ENCODE measurements at regions of chr6 and their contacts with region 1.

Region 1: DNA sequence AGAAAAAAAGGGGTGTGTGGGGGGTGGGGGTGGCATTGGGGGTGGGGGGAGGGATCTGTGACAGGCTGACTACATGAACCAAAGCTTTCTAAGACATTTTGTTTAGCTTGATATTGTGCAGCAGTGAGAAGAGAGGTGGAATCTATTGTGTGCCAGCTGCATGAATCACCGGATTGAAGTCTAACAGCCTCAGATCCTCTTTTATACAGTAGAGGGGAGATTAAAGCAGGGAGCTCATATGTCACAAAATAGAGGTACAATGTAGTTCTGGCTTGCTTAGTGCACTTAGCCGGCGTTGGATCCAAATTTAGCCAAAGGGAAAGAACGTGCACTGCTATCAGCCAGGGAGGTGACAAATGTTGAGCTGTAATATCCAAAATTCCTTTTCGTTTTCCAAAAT is 404.2 kb upstream of the CITED2 start:
- DNase-seq: no peak
- ATAC-seq: peak; percentile 71

Region 2: DNA sequence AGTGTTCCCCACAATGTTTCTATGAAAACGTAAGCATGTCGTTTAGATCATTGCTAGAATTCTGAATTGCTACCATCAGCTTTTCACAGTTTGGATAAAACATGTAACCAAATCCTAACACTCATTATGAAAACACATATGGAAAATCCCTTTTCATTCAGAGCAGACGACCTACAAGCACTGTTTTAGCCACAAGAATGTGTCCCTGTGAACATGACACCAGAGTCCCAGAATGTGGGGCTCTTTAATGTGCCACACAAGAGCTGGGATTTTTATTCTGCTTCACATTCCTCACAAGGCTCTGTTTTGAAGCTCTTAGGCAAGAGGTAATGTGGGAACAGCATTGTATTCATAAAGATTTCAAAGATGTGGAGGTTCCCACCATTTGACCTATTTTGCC is 263.2 kb before region 1 on chr6:
- intact Hi-C with region 1: loop called (anchors 10 kb)
- DNase-seq: no peak
- ATAC-seq: no peak

Region 3: DNA sequence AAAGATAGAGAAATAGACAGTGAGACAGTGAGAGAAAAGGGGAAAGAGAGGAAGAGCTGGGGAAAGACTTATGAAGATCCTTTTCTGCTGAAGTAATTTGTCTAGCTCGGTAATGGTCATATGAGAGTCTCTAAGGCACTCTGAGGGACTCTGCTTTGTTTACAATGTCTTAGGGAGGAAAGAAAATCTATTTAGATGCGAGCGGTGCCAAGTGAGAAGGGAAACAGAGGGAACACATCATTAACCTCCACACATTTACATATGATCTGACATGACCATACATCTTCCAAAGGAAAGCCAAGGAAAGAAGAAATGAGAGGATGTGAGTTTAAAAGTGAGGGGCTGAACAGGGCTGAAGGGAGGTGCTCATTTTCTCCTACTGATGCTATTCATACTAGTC is 458.0 kb after region 1 on chr6:
- intact Hi-C with region 1: no loop called
- DNase-seq: no peak
- ATAC-seq: no peak